ENCODE measurements at regions of chr1 and their contacts with region 1.

Region 1: GRCh38 chr1:50080909-50081586 is 27.7 kb upstream of the ELAVL4 start:
- DNase-seq: peak; percentile 27
- ATAC-seq: peak; percentile 88
- H3K4me3 Mint-ChIP-seq: no peak overlapping the region
- H3K27ac Mint-ChIP-seq: no peak overlapping the region
- H3K4me1 Mint-ChIP-seq: peaks cover 15% of the 10 kb centered on the region
- H3K27me3 Mint-ChIP-seq: peaks cover 4% of the 10 kb centered on the region; the same call in 1 of the 2 replicates
- CTCF ChIP-seq: peak; percentile 37

Region 2: GRCh38 chr1:49995734-49996133 is 85.3 kb before region 1 on chr1:
- CTCF ChIA-PET with region 1: interaction called, 15 read pairs
- POLR2A ChIA-PET with region 1: no interaction called
- DNase-seq: peak; percentile 45
- ATAC-seq: peak; percentile 78
- H3K4me3 Mint-ChIP-seq: no peak overlapping the region
- H3K27ac Mint-ChIP-seq: no peak overlapping the region
- H3K4me1 Mint-ChIP-seq: no peaks in the 10 kb centered on the region
- H3K27me3 Mint-ChIP-seq: no peaks in the 10 kb centered on the region; the same call in 1 of the 2 replicates
- CTCF ChIP-seq: 0 out of 2 replicates have a peak, but pooled peaks have one; percentile 20

Region 3: GRCh38 chr1:50098591-50099021 is 17.6 kb after region 1 on chr1:
- CTCF ChIA-PET with region 1: interaction called, 11 read pairs
- POLR2A ChIA-PET with region 1: no interaction called
- DNase-seq: no peak
- ATAC-seq: no peak
- H3K4me3 Mint-ChIP-seq: no peak overlapping the region
- H3K27ac Mint-ChIP-seq: no peak overlapping the region
- H3K4me1 Mint-ChIP-seq: 0 out of 2 replicates have a peak, but pooled peaks cover 1% of the 10 kb centered on the region
- H3K27me3 Mint-ChIP-seq: peaks cover 3% of the 10 kb centered on the region; the same call in 1 of the 2 replicates
- CTCF ChIP-seq: no peak

Region 4: DNA sequence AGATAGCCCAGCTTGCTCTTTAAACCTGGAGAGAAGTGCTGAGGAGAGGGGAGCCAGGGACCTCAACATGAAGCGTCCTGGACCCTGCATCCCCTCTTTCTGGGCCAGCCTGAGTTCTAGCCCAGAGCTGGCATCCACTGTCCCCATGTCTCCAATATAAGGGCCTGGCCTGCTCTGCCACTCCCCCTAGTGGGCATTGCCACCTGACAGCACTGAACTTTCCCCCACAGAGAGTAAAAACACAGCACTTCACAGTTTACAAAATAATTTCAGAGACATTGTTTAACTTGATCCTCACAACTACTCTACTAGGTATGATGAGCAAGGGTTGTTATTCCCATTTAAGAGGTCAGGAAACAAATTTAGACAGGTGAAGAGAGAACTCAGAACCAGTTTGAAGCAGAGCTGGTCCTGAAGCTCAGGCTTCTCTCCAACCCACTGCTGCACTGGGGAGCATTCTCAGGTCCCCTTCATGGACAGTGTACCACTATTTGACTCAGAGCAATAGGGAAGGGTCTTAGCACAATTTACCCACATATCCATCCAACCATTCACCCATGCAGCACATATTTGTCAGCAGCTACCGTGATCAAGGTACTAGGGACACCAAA is 191.0 kb after region 1 on chr1:
- CTCF ChIA-PET with region 1: interaction called, 12 read pairs
- POLR2A ChIA-PET with region 1: no interaction called
- DNase-seq: peak; percentile 68
- ATAC-seq: peak; percentile 74
- H3K4me3 Mint-ChIP-seq: no peak overlapping the region
- H3K27ac Mint-ChIP-seq: no peak overlapping the region
- H3K4me1 Mint-ChIP-seq: peaks cover 38% of the 10 kb centered on the region
- H3K27me3 Mint-ChIP-seq: peaks cover 29% of the 10 kb centered on the region
- CTCF ChIP-seq: peak; percentile 61; the same call in 1 of the 2 replicates

Region 5: DNA sequence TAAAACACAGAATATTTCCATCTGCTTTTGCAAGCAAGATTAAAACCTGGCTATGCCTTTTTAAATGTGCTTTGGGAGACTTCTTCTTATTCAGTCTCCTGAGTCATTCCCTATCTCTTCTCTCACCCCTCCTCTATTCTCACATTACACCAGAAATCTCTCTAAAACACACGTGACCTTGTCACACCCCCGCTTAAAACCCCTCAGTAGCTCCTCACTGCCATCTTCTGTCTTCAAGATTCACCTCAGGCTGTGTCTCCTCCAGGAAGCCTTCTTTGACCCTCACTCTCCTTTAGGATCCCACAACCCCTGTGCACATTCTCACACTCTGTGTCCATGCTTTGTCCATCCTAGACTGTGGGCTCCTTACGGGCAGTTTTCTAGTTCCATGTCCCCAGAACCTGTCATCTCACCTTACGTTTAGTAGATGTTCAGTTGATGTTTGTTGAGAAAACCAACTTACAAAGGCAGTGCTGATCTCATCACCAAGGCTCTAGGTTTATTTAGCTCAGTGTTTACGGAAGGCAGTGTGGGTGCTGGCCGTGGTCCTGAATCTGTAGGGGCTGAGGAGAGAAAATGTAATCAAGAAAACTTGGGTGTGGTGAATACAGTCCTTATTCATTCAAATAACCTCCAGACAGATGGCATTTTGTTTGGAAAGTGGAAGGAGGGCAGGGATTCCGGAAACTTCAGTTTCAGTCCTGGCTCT is 198.7 kb after region 1 on chr1:
- CTCF ChIA-PET with region 1: interaction called, 10 read pairs
- POLR2A ChIA-PET with region 1: no interaction called
- DNase-seq: peak; percentile 66
- ATAC-seq: peak; percentile 40
- H3K4me3 Mint-ChIP-seq: no peak overlapping the region
- H3K27ac Mint-ChIP-seq: no peak overlapping the region
- H3K4me1 Mint-ChIP-seq: peaks cover 44% of the 10 kb centered on the region
- H3K27me3 Mint-ChIP-seq: no peaks in the 10 kb centered on the region
- CTCF ChIP-seq: no peak

Region 6: GRCh38 chr1:50332941-50333594 is 252.0 kb after region 1 on chr1:
- CTCF ChIA-PET with region 1: interaction called, 13 read pairs
- POLR2A ChIA-PET with region 1: no interaction called
- DNase-seq: peak; percentile 83
- ATAC-seq: peak; percentile 90
- H3K4me3 Mint-ChIP-seq: peak overlapping the region; percentile 63
- H3K27ac Mint-ChIP-seq: no peak overlapping the region
- H3K4me1 Mint-ChIP-seq: peaks cover 12% of the 10 kb centered on the region
- H3K27me3 Mint-ChIP-seq: peaks cover 55% of the 10 kb centered on the region
- CTCF ChIP-seq: peak; percentile 77

Region 7: DNA sequence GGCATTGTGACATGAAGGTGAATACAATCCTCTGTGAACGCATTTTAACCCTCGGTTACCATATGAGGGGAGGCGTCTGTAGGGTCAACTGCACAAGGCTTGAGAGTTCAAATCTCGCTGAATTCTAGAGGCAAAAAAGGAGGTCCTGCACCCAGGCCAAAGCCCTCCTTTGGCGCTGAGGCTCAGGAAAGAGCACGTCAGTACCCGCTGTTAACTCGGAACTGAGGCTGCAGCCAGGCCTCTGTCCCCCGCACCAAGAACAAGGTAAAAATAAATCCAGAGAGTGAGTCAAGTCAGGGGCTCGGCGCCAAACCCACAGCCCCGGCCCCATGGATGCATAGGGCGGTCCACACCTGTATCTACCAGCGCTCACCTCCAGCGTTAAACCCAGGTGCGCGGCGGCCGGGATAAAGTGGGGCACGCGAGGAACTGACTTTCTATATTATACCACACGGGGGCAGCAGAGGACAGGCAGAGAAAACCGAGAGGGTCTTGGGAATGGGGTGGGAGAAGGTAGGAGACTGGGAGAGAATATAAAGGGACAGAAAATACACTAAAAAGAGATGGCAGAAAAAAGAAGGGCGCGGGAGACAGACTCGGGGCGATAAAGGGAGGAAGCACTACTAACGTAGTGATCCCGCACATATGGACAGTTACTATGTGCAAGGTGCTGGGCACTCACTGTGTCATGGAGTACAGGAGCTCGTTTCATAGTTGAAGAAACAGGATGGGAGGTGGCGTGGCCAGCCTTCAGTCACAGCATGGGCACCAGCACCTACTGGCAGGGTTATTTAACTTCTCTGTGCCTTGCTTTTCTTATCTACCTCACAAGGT is 287.3 kb after region 1 on chr1:
- CTCF ChIA-PET with region 1: no interaction called
- POLR2A ChIA-PET with region 1: no interaction called
- DNase-seq: peak; percentile 79
- ATAC-seq: peak; percentile 93
- H3K4me3 Mint-ChIP-seq: peak overlapping the region; percentile 42
- H3K27ac Mint-ChIP-seq: no peak overlapping the region
- H3K4me1 Mint-ChIP-seq: 0 out of 2 replicates have a peak, but pooled peaks cover under 1% of the 10 kb centered on the region
- H3K27me3 Mint-ChIP-seq: peaks cover 39% of the 10 kb centered on the region
- CTCF ChIP-seq: peak; percentile 79

Measured in WTC11 (cell line).